ENCODE measurements at regions of chr17 and their contacts with region 1.

Region 1: GRCh38 chr17:80649678-80650672 is 105.3 kb downstream of the RPTOR start:
- H3K4me3 ChIP-seq: no peak overlapping the region
- H3K27ac ChIP-seq: no peak overlapping the region
- H3K4me1 ChIP-seq: peaks cover 17% of the 10 kb centered on the region
- CTCF ChIP-seq: peak; percentile 66

Region 2: DNA sequence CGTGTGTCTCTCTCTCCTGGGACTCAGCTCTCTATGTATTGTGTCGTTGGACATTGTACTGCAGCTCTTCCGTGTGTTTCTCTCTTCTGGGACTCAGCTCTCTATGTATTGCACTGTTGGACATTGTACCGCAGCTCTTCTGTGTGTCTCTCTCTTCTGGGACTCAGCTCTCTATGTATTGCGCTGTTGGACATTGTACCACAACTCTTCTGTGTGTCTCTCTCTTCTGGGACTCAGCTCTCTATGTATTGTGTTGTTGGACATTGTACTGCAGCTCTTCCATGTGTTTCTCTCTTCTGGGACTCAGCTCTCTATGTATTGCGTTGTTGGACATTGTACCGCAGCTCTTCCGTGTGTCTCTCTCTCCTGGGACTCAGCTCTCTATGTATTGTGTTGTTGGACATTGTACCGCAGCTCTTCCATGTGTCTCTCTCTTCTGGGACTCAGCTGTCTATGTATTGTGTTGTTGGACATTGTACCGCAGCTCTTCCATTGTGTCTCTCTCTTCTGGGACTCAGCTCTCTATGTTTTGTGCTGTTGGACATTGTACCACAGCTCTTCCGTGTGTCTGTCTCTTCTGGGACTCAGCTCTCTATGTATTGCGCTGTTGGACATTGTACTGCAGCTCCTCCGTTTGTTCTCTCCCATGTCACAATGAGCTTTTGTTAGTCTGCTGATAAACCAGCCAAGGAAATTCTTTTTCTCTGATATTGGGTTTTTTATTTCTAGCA is 20.5 kb before region 1 on chr17:
- CTCF ChIA-PET with region 1: interaction called, 20 read pairs
- POLR2A ChIA-PET with region 1: no interaction called
- H3K4me3 ChIP-seq: no peak overlapping the region
- H3K27ac ChIP-seq: no peak overlapping the region
- H3K4me1 ChIP-seq: no peaks in the 10 kb centered on the region; the same call in 1 of the 2 replicates
- CTCF ChIP-seq: no peak

Region 3: DNA sequence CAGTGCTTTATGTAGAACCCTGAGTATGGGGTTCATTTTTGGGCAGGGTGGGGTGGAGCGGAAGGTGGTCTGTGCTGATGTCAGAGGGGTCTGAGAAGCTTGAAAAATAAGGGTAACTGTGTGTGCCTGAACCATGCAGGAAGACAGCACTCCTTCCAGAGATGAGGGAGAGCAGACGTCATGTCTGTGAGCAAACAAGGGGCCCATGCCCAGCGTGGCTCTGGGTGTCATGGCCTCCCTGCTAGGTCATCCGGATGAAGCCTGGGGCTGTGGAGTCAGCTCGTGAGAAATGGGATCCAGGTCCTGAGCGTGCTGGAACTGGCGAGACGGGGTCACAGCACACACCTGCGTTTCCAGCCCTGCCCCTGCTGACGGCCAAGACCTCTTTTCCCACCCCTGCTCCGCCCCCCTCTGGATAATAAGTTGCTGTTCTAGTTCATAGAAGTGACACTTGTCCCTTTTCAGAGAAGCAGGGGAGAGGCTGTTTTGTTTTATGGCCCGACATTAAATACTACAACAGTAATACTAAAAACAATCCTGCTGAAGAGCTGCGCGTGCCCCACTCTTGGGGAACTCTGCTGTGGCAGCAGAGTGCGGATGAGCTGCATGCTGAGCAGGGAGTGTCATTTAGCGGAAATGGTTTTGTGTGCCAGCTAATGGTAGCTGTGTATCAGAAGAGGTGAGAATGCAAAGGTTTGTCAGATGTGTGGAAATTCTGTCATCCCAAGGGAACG is 12.8 kb before region 1 on chr17:
- CTCF ChIA-PET with region 1: interaction called, 22 read pairs
- POLR2A ChIA-PET with region 1: no interaction called
- H3K4me3 ChIP-seq: no peak overlapping the region
- H3K27ac ChIP-seq: no peak overlapping the region
- H3K4me1 ChIP-seq: peaks cover 3% of the 10 kb centered on the region; the same call in 1 of the 2 replicates
- CTCF ChIP-seq: no peak

Region 4: GRCh38 chr17:80660527-80661198 is 10.7 kb after region 1 on chr17:
- CTCF ChIA-PET with region 1: interaction called, 11 read pairs
- POLR2A ChIA-PET with region 1: no interaction called
- H3K4me3 ChIP-seq: no peak overlapping the region
- H3K27ac ChIP-seq: no peak overlapping the region
- H3K4me1 ChIP-seq: peaks cover 11% of the 10 kb centered on the region; the same call in 1 of the 2 replicates
- CTCF ChIP-seq: no peak

Measured in HEK293 (cell line).